ENCODE measurements at regions of chr12 and their contacts with region 1.

Region 1: DNA sequence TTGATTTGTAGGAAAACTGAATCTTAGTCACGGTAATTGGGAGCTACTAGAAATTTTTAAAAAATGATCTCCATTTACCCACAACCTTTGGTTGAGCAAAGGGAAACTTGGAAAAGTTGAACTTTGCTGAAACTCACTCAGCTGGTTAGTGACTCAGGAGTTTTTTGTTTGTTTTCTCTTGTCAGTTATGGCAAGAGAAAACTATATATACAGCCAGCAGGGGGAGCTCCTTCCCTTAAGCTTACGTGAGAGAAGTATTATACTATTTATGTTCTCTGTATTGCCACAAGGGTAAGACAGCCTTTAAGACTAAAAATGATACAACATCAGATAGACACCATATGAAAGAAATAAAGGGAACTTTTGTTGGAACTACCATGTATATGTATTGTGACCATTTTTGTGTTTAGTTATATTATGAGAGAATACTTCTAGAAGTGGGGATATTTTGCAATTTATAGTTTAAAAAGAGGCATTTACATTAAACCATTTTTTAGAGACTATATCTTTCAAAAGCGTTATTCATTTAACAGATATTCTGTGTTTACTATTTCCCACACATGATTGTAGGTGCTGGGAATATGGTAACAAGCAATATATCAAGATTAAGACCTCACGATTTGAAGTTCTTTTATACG is 28.1 kb upstream of the TBC1D30 start:
- DNase-seq: peak in 3 of 5 donors; percentile 29 to 49 (median 43)
- ATAC-seq: peak; percentile 15 to 78 (median 70)
- H3K4me3 ChIP-seq: no peak overlapping the region
- H3K27ac ChIP-seq: no peak overlapping the region
- H3K4me1 ChIP-seq: peaks cover 0 to 10% (median 0%) of the 10 kb centered on the region in 12 donors
- H3K27me3 ChIP-seq: no peaks in the 10 kb centered on the region
- CTCF ChIP-seq: peak; percentile 75 to 89 (median 83)
- POLR2A ChIP-seq: no peak

Region 2: GRCh38 chr12:65232476-65233077 is 436.2 kb after region 1 on chr12:
- intact Hi-C with region 1: loop called in 1 of 10 experiments (anchors 10 kb)
- DNase-seq: no peak
- ATAC-seq: no peak
- H3K4me3 ChIP-seq: no peak overlapping the region
- H3K27ac ChIP-seq: no peak overlapping the region
- H3K4me1 ChIP-seq: peaks cover 0 to 5% (median 0%) of the 10 kb centered on the region in 12 donors
- H3K27me3 ChIP-seq: no peaks in the 10 kb centered on the region
- CTCF ChIP-seq: peak; percentile 33 to 71 (median 55)
- POLR2A ChIP-seq: no peak

Measured in heart left ventricle (tissue), 16 donors.